ENCODE measurements at regions of chr3 and their contacts with region 1.

Region 1: DNA sequence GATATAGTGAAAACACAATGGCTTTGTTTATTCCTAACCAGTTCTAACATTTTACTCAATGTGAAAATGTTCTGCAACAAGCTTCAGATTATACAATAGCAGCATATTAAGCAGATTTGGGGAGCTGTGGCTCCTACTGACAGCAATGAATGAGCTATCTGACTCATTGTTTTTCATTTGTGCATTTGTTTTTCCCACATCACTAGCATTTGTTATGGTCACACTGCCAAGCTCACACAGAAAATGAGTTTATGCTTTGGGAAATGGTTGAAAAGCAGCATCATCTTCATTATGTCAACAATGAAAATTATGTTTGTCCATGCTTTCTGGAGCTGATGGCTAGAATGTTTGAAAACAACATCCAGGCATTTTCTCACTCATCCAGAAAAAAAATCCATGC is 53.5 kb downstream of the ZPLD1 start:
- DNase-seq: no peak
- H3K4me3 Mint-ChIP-seq: no peak overlapping the region
- H3K27ac Mint-ChIP-seq: no peak overlapping the region
- H3K4me1 Mint-ChIP-seq: no peaks in the 10 kb centered on the region
- H3K27me3 Mint-ChIP-seq: no peaks in the 10 kb centered on the region
- CTCF ChIP-seq: no peak

Region 2: GRCh38 chr3:102471001-102471400 is 17.3 kb before region 1 on chr3:
- CTCF ChIA-PET with region 1: no interaction called
- intact Hi-C with region 1: loop called (anchors 1 kb)
- DNase-seq: no peak
- H3K4me3 Mint-ChIP-seq: no peak overlapping the region
- H3K27ac Mint-ChIP-seq: no peak overlapping the region
- H3K4me1 Mint-ChIP-seq: peaks cover 6% of the 10 kb centered on the region
- H3K27me3 Mint-ChIP-seq: no peaks in the 10 kb centered on the region
- CTCF ChIP-seq: peak; percentile 13